Activated CD8-positive, alpha-beta memory T cell treated with anti-CD3 and anti-CD28 coated beads, Interleukin-2, amount 10 ng/mL, durations not matched to agents 7 days and 5 days (primary cell): ENCODE measurements at regions of chr3 and their contacts with region 1.

Region 1: GRCh38 chr3:101518421-101518871 is 5.4 kb upstream of the SENP7 start:
- DNase-seq: peak; percentile 76
- ATAC-seq: peak; percentile 98
- H3K4me3 Mint-ChIP-seq: peak overlapping the region; percentile 40
- H3K27ac Mint-ChIP-seq: peak overlapping the region; percentile 87
- H3K4me1 Mint-ChIP-seq: peaks cover 45% of the 10 kb centered on the region
- H3K27me3 Mint-ChIP-seq: no peaks in the 10 kb centered on the region

Region 2: DNA sequence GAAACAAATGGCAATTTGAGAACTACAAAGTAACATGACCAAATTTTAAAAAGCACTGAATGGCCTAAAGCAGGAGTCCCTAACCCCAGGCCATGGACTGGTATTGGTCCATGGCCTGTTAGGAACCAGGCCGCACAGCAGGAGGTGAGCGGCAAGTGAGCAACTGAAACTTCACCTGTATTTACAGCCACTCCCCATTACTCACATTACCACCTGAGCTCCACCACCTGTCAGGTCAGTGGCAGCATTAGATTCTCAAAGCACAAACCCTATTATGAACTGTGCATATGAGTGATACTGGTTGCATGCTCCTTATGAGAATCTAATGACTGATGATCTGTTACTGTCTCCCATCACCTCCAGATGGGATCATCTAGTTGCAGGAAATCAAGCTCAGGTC is 54.2 kb before region 1 on chr3:
- CTCF ChIA-PET with region 1: no interaction called
- DNase-seq: no peak
- ATAC-seq: no peak
- H3K4me3 Mint-ChIP-seq: no peak overlapping the region
- H3K27ac Mint-ChIP-seq: no peak overlapping the region
- H3K4me1 Mint-ChIP-seq: peaks cover 16% of the 10 kb centered on the region
- H3K27me3 Mint-ChIP-seq: no peaks in the 10 kb centered on the region

Region 3: GRCh38 chr3:101542957-101543356 is 24.5 kb after region 1 on chr3:
- CTCF ChIA-PET with region 1: interaction called, 16 read pairs
- DNase-seq: no peak
- ATAC-seq: peak; percentile 84
- H3K4me3 Mint-ChIP-seq: no peak overlapping the region
- H3K27ac Mint-ChIP-seq: peak overlapping the region; percentile 82
- H3K4me1 Mint-ChIP-seq: peaks cover 27% of the 10 kb centered on the region
- H3K27me3 Mint-ChIP-seq: peaks cover 9% of the 10 kb centered on the region

Region 4: GRCh38 chr3:101809178-101810021 is 291.0 kb after region 1 on chr3:
- CTCF ChIA-PET with region 1: no interaction called
- DNase-seq: no peak
- ATAC-seq: peak; percentile 62
- H3K4me3 Mint-ChIP-seq: no peak overlapping the region
- H3K27ac Mint-ChIP-seq: peak overlapping the region; percentile 52
- H3K4me1 Mint-ChIP-seq: peaks cover 55% of the 10 kb centered on the region
- H3K27me3 Mint-ChIP-seq: no peaks in the 10 kb centered on the region